HCT116 (cell line): ENCODE measurements at regions of chr2 and their contacts with region 1.

Region 1: GRCh38 chr2:113203901-113204519 is 30.2 kb downstream of the PSD4 start:
- DNase-seq: peak; percentile 72
- ATAC-seq: peak; percentile 76
- H3K4me3 ChIP-seq: peak overlapping the region in 1 of 2 experiments; percentile 1; a peak in 1 of 4 replicates
- H3K27ac ChIP-seq: peak overlapping the region; percentile 33; the same call in 1 of the 2 replicates
- H3K4me1 ChIP-seq: peaks cover 10 to 31% of the 10 kb centered on the region in 2 experiments
- H3K27me3 ChIP-seq: no peaks in the 10 kb centered on the region
- CTCF ChIP-seq: peak; percentile 90 to 95 (median 93)
- POLR2A ChIP-seq: no peak
- RAD21 ChIP-seq: peak; percentile 99

Region 2: DNA sequence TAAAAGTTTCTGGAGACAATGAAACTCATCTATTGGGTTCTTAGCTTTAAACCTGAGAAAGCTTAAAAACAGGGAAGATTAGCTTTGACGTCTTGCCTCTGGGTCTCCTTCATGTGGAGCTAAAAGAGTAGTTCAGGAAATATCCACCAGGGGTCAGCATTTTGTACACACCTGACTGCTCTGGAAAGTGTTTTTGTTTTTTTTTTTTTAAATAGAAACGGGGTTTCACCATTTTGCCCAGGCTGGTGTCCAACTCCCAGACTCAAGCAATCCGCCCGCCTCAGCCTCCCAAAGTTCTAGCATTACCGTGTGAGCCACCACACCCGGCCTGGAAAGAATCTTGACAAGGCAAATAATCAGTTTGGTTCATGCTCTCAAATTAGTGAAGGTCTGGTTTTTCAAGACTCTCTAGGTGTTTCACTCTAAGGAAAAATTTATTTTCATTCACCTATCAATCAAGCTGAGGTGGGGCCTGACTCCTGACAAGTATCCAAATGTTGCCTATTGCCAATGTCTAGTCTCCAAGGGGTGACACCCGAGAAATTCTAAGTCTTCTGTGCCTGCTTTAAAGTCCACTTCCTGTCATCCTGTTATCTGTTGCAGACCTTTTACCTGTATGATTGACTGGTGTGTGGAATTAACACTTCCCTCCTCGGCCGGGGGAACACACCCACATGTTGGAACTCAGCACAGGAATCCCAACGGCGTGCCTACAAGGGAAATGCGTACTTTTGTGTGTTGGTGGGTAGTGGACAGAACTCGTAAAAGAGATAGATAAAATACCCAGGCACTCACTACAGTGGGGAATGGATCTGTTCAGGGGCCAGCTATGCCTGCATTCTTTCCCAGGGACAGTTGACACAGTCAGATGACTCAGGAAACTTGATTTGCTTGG is 65.3 kb before region 1 on chr2:
- CTCF ChIA-PET with region 1: interaction called, 103 read pairs
- POLR2A ChIA-PET with region 1: interaction called, 11 read pairs
- RAD21 ChIA-PET with region 1: interaction called, 3 to 10 read pairs
- intact Hi-C with region 1: loop called (anchors 1 kb)
- DNase-seq: peak; percentile 79
- ATAC-seq: peak; percentile 80
- H3K4me3 ChIP-seq: 0 out of 4 replicates have a peak overlapping the region, but pooled peaks of 1 of the 2 experiments have one; percentile 5
- H3K27ac ChIP-seq: no peak overlapping the region
- H3K4me1 ChIP-seq: peaks cover 0 to 16% of the 10 kb centered on the region in 2 experiments; a peak in 3 of 4 replicates
- H3K27me3 ChIP-seq: no peaks in the 10 kb centered on the region
- CTCF ChIP-seq: peak; percentile 75 to 93 (median 75)
- POLR2A ChIP-seq: no peak
- RAD21 ChIP-seq: peak; percentile 77

Region 3: DNA sequence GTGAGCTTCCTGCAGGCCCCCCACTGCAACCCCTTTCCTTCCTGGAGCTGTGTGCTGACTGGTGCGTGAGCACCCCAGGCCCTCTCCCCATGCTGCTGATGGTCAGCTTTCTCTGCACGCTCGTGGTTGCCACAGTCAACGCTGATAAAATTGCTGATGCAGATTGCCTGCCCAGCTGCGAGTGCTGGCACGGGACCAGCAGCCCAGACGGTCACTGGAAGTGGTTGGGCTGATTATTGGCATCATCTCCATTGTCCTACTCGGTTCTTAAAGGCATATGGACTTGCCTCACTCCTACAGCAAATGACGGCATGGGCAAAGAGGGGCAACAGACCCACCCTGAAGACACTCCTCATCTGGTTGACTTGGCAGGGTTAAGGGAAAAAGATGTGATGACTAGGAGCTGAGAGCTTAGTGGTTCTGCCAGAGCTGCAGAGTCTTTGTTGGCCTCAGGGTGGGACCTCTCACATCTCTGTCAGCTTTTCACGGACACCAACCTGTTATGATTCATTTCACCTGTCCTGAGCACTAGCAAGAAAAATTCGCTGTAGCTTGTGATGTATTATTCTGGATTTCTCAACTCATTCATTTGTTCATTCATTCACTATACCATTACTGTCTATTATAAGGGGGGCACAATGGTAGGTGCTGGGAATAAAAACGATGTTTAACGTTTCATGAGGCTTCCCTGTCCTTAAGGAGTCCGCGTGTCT is 36.3 kb after region 1 on chr2:
- CTCF ChIA-PET with region 1: interaction called, 29 read pairs
- POLR2A ChIA-PET with region 1: interaction called, 11 read pairs
- RAD21 ChIA-PET with region 1: interaction called, 5 to 8 read pairs
- intact Hi-C with region 1: loop called (anchors 1 kb)
- DNase-seq: peak; percentile 55
- ATAC-seq: peak; percentile 50
- H3K4me3 ChIP-seq: peak overlapping the region in 1 of 2 experiments; percentile 38; a peak in 3 of 4 replicates
- H3K27ac ChIP-seq: peak overlapping the region; percentile 95
- H3K4me1 ChIP-seq: peaks cover 53 to 65% of the 10 kb centered on the region in 2 experiments
- H3K27me3 ChIP-seq: no peaks in the 10 kb centered on the region
- CTCF ChIP-seq: 0 out of 6 replicates have a peak, but pooled peaks of 1 of the 3 experiments have one; percentile 10
- POLR2A ChIP-seq: peak; percentile 7
- RAD21 ChIP-seq: no peak

Region 4: DNA sequence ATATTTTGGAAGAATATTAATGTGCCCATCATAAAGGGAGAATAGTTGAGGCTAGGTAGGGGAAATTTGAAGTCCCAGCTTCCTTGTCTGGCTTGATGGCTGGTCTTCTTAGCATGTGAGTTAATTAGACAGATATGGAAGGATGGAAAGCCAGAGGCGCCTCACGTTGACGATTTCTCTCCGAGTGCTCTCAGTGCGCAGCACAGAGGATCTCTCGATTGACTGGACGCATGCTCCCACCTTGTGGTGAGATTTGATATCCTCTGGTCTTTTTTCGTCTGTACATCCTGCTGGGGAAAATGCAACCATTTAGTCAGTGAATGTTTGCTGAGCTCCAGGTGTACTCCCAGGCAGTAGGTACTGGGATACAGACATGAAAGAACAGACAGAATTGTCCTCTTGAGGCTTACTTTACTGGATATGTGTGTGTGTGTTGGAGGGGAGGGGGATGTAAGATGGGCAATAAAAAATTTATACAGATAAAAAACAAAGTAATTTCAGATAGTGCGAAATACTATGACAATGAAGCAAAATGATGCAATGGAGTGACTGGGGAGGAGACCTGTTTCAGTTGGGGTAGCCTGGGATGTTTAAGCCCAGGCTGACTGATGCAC is 166.6 kb after region 1 on chr2:
- CTCF ChIA-PET with region 1: interaction called, 40 read pairs
- POLR2A ChIA-PET with region 1: interaction called, 4 read pairs
- RAD21 ChIA-PET with region 1: interaction called, 4 read pairs
- intact Hi-C with region 1: loop called (anchors 1 kb)
- DNase-seq: peak; percentile 65
- ATAC-seq: peak; percentile 97
- H3K4me3 ChIP-seq: no peak overlapping the region
- H3K27ac ChIP-seq: no peak overlapping the region
- H3K4me1 ChIP-seq: peaks cover 0 to 4% of the 10 kb centered on the region in 2 experiments; a peak in 1 of 4 replicates
- H3K27me3 ChIP-seq: no peaks in the 10 kb centered on the region
- CTCF ChIP-seq: peak; percentile 55 to 97 (median 68)
- POLR2A ChIP-seq: no peak
- RAD21 ChIP-seq: peak; percentile 97

Region 5: GRCh38 chr2:114022360-114023085 is 818.5 kb after region 1 on chr2:
- CTCF ChIA-PET with region 1: no interaction called
- POLR2A ChIA-PET with region 1: no interaction called
- RAD21 ChIA-PET with region 1: no interaction called
- intact Hi-C with region 1: no loop called
- DNase-seq: peak; percentile 61
- ATAC-seq: peak; percentile 67
- H3K4me3 ChIP-seq: no peak overlapping the region
- H3K27ac ChIP-seq: no peak overlapping the region
- H3K4me1 ChIP-seq: peaks cover 0 to 13% of the 10 kb centered on the region in 2 experiments; a peak in 2 of 4 replicates
- H3K27me3 ChIP-seq: no peaks in the 10 kb centered on the region
- CTCF ChIP-seq: no peak
- POLR2A ChIP-seq: no peak
- RAD21 ChIP-seq: no peak